ENCODE measurements at regions of chr7 and their contacts with region 1.

Region 1: GRCh38 chr7:148962823-148963582 is 65.3 kb downstream of the PDIA4 start:
- DNase-seq: peak; percentile 54 to 70
- ATAC-seq: peak; percentile 75 to 86 (median 82)
- H3K4me3 ChIP-seq: peak overlapping the region; percentile 36 to 72 (median 60)
- H3K27ac ChIP-seq: peak overlapping the region in 9 of 10 donors; percentile 29 to 87 (median 77)
- H3K4me1 ChIP-seq: peaks cover 0 to 21% (median 13%) of the 10 kb centered on the region in 9 donors
- H3K27me3 ChIP-seq: no peaks in the 10 kb centered on the region
- CTCF ChIP-seq: peak; percentile 57 to 94 (median 76)

Region 2: GRCh38 chr7:148262721-148263229 is 700.2 kb before region 1 on chr7:
- intact Hi-C with region 1: loop called in 3 of 10 experiments (anchors 10 kb)
- DNase-seq: peak; percentile 49 to 66
- ATAC-seq: peak; percentile 53 to 88 (median 79)
- H3K4me3 ChIP-seq: peak overlapping the region in 2 of 10 donors; percentile 11 to 12
- H3K27ac ChIP-seq: no peak overlapping the region
- H3K4me1 ChIP-seq: peaks cover 0 to 8% (median 4%) of the 10 kb centered on the region in 9 donors
- H3K27me3 ChIP-seq: peaks cover 0 to 33% (median 8%) of the 10 kb centered on the region in 7 donors
- CTCF ChIP-seq: peak; percentile 80 to 98 (median 92)

Region 3: DNA sequence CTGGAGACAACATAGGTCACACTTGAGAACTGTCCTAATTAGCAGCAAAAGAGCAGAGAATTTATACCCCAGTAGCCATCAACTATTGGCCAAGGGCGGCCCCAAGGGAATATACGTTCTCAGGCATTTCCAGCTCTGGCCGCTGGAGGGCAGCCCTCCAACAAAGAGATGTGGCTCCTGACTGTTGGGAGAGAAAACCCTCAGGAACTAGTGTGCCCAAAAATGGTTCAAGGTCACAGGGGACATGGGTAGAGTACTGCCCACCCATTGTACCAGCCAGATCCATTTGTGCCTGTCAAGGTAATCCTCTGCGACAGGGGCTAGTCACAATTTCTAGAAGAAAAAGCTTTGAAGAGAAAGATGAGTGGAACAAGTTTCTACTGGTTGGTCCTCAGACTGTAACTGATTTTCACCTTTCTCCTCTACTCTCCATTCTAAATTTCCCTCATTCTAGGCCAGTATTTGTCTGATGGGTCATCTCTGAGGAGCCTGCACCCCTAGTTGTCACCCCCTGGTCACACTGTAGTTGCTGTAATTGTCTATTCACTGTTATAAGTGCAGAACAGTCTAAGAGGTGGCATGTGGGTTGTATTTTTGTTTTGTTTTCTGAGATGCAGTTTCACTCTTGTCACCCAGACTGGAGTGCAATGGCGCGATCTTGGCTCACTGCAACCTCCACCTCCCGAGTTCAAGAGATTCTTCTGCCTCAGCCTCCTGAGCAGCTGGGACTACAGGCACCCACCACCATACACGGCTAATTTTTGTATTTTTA is 387.2 kb before region 1 on chr7:
- intact Hi-C with region 1: loop called in 9 of 10 experiments (anchors 2 to 10 kb)
- DNase-seq: peak; percentile 47 to 63
- ATAC-seq: peak; percentile 55 to 81 (median 71)
- H3K4me3 ChIP-seq: no peak overlapping the region
- H3K27ac ChIP-seq: no peak overlapping the region
- H3K4me1 ChIP-seq: peaks cover 0 to 6% (median 0%) of the 10 kb centered on the region in 9 donors
- H3K27me3 ChIP-seq: no peaks in the 10 kb centered on the region
- CTCF ChIP-seq: peak; percentile 47 to 87 (median 80)

Region 4: GRCh38 chr7:148819697-148820360 is 143.2 kb before region 1 on chr7:
- intact Hi-C with region 1: no loop called
- DNase-seq: no peak
- ATAC-seq: no peak
- H3K4me3 ChIP-seq: no peak overlapping the region
- H3K27ac ChIP-seq: no peak overlapping the region
- H3K4me1 ChIP-seq: no peaks in the 10 kb centered on the region
- H3K27me3 ChIP-seq: no peaks in the 10 kb centered on the region
- CTCF ChIP-seq: no peak

Region 5: DNA sequence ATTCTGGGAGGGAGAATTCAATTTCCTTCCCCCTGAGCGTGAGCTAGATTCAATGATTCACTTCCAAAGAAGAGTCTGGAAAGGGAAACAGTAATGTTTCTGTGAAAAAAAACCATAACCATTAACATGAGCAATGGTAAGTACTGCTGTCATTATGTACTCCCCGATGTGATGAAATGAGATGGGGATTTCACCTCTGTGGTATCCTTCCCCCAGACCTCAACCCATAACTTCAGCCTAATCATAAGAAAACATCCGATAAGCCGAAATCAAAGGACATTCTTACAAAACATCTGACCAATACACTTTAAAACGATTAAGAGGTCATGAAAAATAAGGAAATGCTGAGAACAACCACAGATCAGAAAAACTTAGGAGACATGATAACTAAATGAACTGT is 106.1 kb before region 1 on chr7:
- intact Hi-C with region 1: loop called in 6 of 10 experiments (anchors 2 to 10 kb)
- DNase-seq: no peak
- ATAC-seq: no peak
- H3K4me3 ChIP-seq: no peak overlapping the region
- H3K27ac ChIP-seq: no peak overlapping the region
- H3K4me1 ChIP-seq: peaks cover 0 to 9% (median 0%) of the 10 kb centered on the region in 9 donors
- H3K27me3 ChIP-seq: no peaks in the 10 kb centered on the region
- CTCF ChIP-seq: no peak

Region 6: GRCh38 chr7:148940702-148941597 is 22.1 kb before region 1 on chr7:
- intact Hi-C with region 1: loop called in 3 of 10 experiments (anchors 1 to 2 kb)
- DNase-seq: peak; percentile 73 to 79
- ATAC-seq: peak; percentile 93 to 98 (median 97)
- H3K4me3 ChIP-seq: peak overlapping the region; percentile 33 to 99 (median 68)
- H3K27ac ChIP-seq: peak overlapping the region; percentile 9 to 93 (median 78)
- H3K4me1 ChIP-seq: peaks cover 0 to 19% (median 9%) of the 10 kb centered on the region in 9 donors
- H3K27me3 ChIP-seq: no peaks in the 10 kb centered on the region
- CTCF ChIP-seq: no peak

Measured in heart right ventricle (tissue), 16 donors.